Mucosa of descending colon (tissue), 3 donors: ENCODE measurements at regions of chr13 and their contacts with region 1.

Region 1: GRCh38 chr13:34847759-34848158 is 94.3 kb upstream of the NBEA start:
- DNase-seq: peak in 1 of 3 donors; percentile 3
- ATAC-seq: no peak
- H3K4me3 ChIP-seq: no peak overlapping the region
- H3K4me1 ChIP-seq: no peaks in the 10 kb centered on the region
- CTCF ChIP-seq: no peak

Region 2: DNA sequence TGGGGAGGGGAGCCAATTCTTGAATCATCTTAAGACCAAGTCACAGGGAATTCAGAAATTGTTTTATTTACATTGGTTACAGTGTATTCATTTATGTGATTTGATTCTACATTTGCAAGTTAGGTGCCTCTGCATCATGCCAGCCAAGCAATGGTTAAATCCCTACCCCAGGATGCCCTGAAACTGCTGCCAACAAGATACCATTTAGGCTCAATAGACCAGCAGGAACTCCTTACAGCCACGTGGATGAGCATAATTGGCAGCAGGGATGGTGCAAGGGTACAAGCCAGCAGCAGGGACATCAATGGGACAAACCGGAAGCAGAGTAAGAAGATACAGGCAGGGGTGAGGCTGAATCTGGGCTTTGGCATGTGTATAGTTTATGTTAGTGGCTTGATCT is 21.9 kb after region 1 on chr13:
- intact Hi-C with region 1: loop called in 1 of 2 experiments (anchors 1 kb)
- DNase-seq: no peak
- ATAC-seq: no peak
- H3K4me3 ChIP-seq: no peak overlapping the region
- H3K4me1 ChIP-seq: no peaks in the 10 kb centered on the region
- CTCF ChIP-seq: no peak

Region 3: GRCh38 chr13:35025343-35025742 is 177.6 kb after region 1 on chr13:
- intact Hi-C with region 1: no loop called
- DNase-seq: no peak
- ATAC-seq: no peak
- H3K4me3 ChIP-seq: no peak overlapping the region
- H3K4me1 ChIP-seq: no peaks in the 10 kb centered on the region
- CTCF ChIP-seq: no peak

Region 4: GRCh38 chr13:35057858-35058257 is 210.1 kb after region 1 on chr13:
- intact Hi-C with region 1: no loop called
- DNase-seq: no peak
- ATAC-seq: no peak
- H3K4me3 ChIP-seq: no peak overlapping the region
- H3K4me1 ChIP-seq: no peaks in the 10 kb centered on the region
- CTCF ChIP-seq: no peak